Activated CD4-positive, alpha-beta memory T cell treated with anti-CD3 and anti-CD28 coated beads, Interleukin-2, amount 10 ng/mL, durations not matched to agents 7 days and 5 days (primary cell): ENCODE measurements at regions of chr3 and their contacts with region 1.

Region 1: GRCh38 chr3:38164966-38165680 is at the start of gene OXSR1:
- DNase-seq: peak; percentile 99
- H3K4me3 Mint-ChIP-seq: peak within 1 kb of the TSS; percentile 96
- H3K27ac Mint-ChIP-seq: peak within 1 kb of the TSS; percentile 99
- H3K4me1 Mint-ChIP-seq: peaks cover 51% of the 10 kb centered on the region
- H3K27me3 Mint-ChIP-seq: no peaks in the 10 kb centered on the region
- total RNA-seq, gene OXSR1: 67.5 to 71.3 TPM

Region 2: DNA sequence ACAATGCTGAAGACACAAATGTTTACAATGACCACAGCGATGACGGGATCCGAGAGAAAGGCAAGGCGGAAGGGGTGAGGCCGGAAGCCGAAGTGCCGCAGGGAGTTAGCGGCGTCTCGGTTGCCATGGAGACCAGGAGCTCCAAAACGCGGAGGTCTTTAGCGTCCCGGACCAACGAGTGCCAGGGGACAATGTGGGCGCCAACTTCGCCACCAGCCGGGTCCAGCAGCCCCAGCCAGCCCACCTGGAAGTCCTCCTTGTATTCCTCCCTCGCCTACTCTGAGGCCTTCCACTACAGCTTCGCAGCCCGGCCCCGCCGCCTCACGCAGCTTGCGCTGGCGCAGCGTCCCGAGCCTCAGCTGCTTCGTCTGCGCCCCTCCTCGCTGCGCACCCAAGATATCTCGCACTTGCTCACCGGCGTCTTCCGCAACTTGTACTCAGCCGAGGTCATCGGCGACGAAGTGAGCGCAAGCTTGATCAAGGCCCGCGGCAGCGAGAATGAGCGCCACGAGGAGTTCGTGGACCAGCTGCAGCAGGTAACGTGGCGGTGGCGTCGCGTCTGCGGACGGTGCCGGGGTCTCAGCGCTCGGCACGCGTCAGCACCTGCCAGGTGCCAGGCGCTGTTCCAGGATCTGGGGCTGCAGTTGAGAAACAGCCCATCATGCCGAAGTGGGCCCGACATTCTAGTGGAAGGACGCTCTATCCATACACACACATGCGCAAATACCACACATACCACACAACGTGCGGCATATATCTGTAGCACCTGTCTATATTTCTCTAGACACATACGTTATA is 125.8 kb before region 1 on chr3 and contains the start of gene DLEC1:
- CTCF ChIA-PET with region 1: interaction called, 3 read pairs
- POLR2A ChIA-PET with region 1: interaction called, 26 read pairs
- DNase-seq: peak; percentile 94
- H3K4me3 Mint-ChIP-seq: peak within 1 kb of the TSS; percentile 54
- H3K27ac Mint-ChIP-seq: peak within 1 kb of the TSS; percentile 98
- H3K4me1 Mint-ChIP-seq: peaks cover 37% of the 10 kb centered on the region
- H3K27me3 Mint-ChIP-seq: no peaks in the 10 kb centered on the region
- total RNA-seq, gene DLEC1: 3.8 to 4.2 TPM

Region 3: GRCh38 chr3:38054291-38055001 is 110.7 kb before region 1 on chr3:
- CTCF ChIA-PET with region 1: no interaction called
- POLR2A ChIA-PET with region 1: no interaction called
- DNase-seq: no peak
- H3K4me3 Mint-ChIP-seq: no peak overlapping the region
- H3K27ac Mint-ChIP-seq: no peak overlapping the region
- H3K4me1 Mint-ChIP-seq: peaks cover 10% of the 10 kb centered on the region
- H3K27me3 Mint-ChIP-seq: no peaks in the 10 kb centered on the region

Region 4: GRCh38 chr3:38136777-38137614 is 28.1 kb before region 1 on chr3 and contains the start of gene ACAA1:
- CTCF ChIA-PET with region 1: interaction called, 37 read pairs
- POLR2A ChIA-PET with region 1: interaction called, 286 read pairs
- DNase-seq: peak; percentile 99
- H3K4me3 Mint-ChIP-seq: peak within 1 kb of the TSS; percentile 90
- H3K27ac Mint-ChIP-seq: peak within 1 kb of the TSS; percentile 96
- H3K4me1 Mint-ChIP-seq: peaks cover 74% of the 10 kb centered on the region
- H3K27me3 Mint-ChIP-seq: no peaks in the 10 kb centered on the region
- total RNA-seq, gene ACAA1: 76.8 to 77.5 TPM

Region 5: GRCh38 chr3:38190481-38190881 is 25.4 kb after region 1 on chr3:
- CTCF ChIA-PET with region 1: interaction called, 6 read pairs
- POLR2A ChIA-PET with region 1: interaction called, 34 read pairs
- DNase-seq: no peak
- H3K4me3 Mint-ChIP-seq: no peak overlapping the region
- H3K27ac Mint-ChIP-seq: peak overlapping the region; percentile 24
- H3K4me1 Mint-ChIP-seq: peaks cover 9% of the 10 kb centered on the region
- H3K27me3 Mint-ChIP-seq: no peaks in the 10 kb centered on the region

Region 6: GRCh38 chr3:38346587-38347410 is 181.7 kb after region 1 on chr3 and contains the start of gene XYLB:
- CTCF ChIA-PET with region 1: interaction called, 11 read pairs
- POLR2A ChIA-PET with region 1: interaction called, 11 read pairs
- DNase-seq: peak; percentile 84
- H3K4me3 Mint-ChIP-seq: peak within 1 kb of the TSS; percentile 71
- H3K27ac Mint-ChIP-seq: no peak within 1 kb of the TSS
- H3K4me1 Mint-ChIP-seq: peaks cover 23% of the 10 kb centered on the region
- H3K27me3 Mint-ChIP-seq: peaks cover 7% of the 10 kb centered on the region
- total RNA-seq, gene XYLB: 3.1 to 3.2 TPM